Psoas muscle (tissue), 8 donors: ENCODE measurements at regions of chr18 and their contacts with region 1.

Region 1: DNA sequence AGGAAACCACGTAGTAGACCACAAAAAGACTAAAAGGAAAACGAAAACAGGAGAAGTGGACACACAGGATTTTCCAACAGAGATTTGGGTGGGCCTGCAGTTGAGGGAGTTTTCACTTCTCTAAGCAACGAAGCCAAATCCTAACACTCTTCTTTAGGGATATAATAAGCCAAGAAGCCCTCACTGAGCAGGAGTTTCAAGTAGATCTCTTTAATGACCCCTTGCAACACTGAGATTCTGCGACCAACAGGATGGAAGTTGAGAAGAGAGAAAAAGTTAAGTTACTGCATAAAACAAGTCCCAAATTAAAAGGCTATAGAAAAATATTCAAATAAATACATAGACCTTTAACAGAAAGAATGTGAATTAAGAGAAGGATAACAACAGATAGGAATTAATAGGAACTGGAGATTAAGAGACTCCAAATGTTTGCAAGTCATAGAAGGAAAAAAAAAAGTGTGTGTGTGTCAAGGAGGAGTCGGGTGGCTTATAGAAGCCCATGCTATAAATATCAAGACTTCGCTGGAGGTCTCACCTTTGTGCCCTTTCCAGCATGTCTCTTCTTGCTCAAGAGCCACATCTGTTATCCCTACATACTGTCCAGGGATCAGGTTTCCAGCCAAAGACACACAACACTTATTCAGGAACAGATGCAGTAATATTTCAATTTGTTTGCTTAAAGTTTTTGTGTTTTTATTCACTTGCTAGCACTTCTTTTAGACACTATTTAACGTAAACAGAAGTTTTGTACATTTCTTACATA is 69.4 kb upstream of the ARHGAP28 start:
- DNase-seq: no peak
- ATAC-seq: peak; percentile 49 to 97 (median 93)
- H3K4me3 ChIP-seq: peak overlapping the region; percentile 22
- H3K27ac ChIP-seq: peak overlapping the region; percentile 12
- H3K4me1 ChIP-seq: peaks cover 5% of the 10 kb centered on the region
- H3K27me3 ChIP-seq: no peaks in the 10 kb centered on the region
- CTCF ChIP-seq: no peak

Region 2: DNA sequence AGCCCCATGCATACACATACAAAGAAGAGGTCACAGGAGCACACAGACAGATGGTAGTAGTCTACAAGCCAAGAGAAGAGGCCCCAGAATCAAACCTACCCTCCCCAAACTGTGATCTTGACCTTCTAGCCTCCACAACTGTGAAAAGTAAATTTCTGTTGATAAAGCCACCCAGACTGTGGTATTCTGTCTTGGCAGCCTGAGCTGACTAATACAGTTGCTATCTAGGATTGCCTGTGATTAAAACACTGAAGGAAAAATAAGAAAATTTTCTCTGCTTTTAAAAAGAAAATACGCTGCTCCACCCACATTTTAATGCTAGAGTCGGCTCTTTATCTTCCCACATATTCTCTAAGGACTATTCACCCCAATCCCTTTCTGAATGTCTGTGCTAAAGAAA is 621.1 kb before region 1 on chr18:
- intact Hi-C with region 1: no loop called
- DNase-seq: no peak
- ATAC-seq: no peak
- H3K4me3 ChIP-seq: no peak overlapping the region
- H3K27ac ChIP-seq: no peak overlapping the region
- H3K4me1 ChIP-seq: no peaks in the 10 kb centered on the region
- H3K27me3 ChIP-seq: no peaks in the 10 kb centered on the region
- CTCF ChIP-seq: no peak

Region 3: GRCh38 chr18:6561420-6561861 is 98.7 kb before region 1 on chr18:
- intact Hi-C with region 1: loop called in 1 of 2 experiments (anchors 10 kb)
- DNase-seq: peak; percentile 53 to 65
- ATAC-seq: peak; percentile 59 to 75 (median 68)
- H3K4me3 ChIP-seq: no peak overlapping the region
- H3K27ac ChIP-seq: no peak overlapping the region
- H3K4me1 ChIP-seq: no peaks in the 10 kb centered on the region
- H3K27me3 ChIP-seq: no peaks in the 10 kb centered on the region
- CTCF ChIP-seq: no peak

Region 4: GRCh38 chr18:8450013-8450412 is 1789.9 kb after region 1 on chr18:
- intact Hi-C with region 1: loop called in 1 of 2 experiments (anchors 10 kb)
- DNase-seq: no peak
- ATAC-seq: peak in 1 of 4 donors; percentile 37
- H3K4me3 ChIP-seq: no peak overlapping the region
- H3K27ac ChIP-seq: no peak overlapping the region
- H3K4me1 ChIP-seq: no peaks in the 10 kb centered on the region
- H3K27me3 ChIP-seq: no peaks in the 10 kb centered on the region
- CTCF ChIP-seq: peak; percentile 28